CD8-positive, alpha-beta T cell (primary cell): ENCODE measurements at regions of chr16 and their contacts with region 1.

Region 1: GRCh38 chr16:8905168-8905762 is 23.1 kb downstream of the LITAFD start:
- DNase-seq: peak in 2 of 9 experiments; percentile 35 to 48
- ATAC-seq: peak; percentile 66
- H3K4me3 ChIP-seq: no peak overlapping the region
- H3K4me3 Mint-ChIP-seq: no peak overlapping the region
- H3K27ac ChIP-seq: no peak overlapping the region
- H3K27ac Mint-ChIP-seq: no peak overlapping the region
- H3K4me1 ChIP-seq: peaks cover 8% of the 10 kb centered on the region
- H3K4me1 Mint-ChIP-seq: peaks cover 11% of the 10 kb centered on the region
- H3K27me3 ChIP-seq: no peaks in the 10 kb centered on the region
- H3K27me3 Mint-ChIP-seq: no peaks in the 10 kb centered on the region
- CTCF ChIP-seq: peak; percentile 15

Region 2: DNA sequence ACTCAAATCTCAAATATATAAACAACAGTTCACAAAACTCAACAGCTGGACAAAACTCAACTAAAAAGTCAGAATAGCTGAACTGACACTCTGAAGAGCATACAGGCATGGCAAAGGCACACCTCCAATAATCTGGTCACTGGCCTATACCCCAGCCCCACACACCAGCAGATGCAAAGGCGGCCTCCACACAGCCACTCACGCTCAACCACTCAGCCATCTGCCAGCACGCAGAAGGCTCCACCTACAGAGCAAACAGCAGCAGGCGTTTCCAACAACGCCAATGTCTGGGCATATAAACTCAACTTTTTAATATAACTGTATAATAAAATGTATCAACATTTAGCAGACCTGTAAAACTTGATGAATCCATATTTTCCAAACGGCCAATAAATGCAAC is 41.3 kb after region 1 on chr16:
- CTCF ChIA-PET with region 1: no interaction called
- POLR2A ChIA-PET with region 1: no interaction called
- intact Hi-C with region 1: no loop called
- DNase-seq: no peak
- ATAC-seq: no peak
- H3K4me3 ChIP-seq: no peak overlapping the region
- H3K4me3 Mint-ChIP-seq: peak overlapping the region; percentile 15
- H3K27ac ChIP-seq: no peak overlapping the region
- H3K27ac Mint-ChIP-seq: no peak overlapping the region
- H3K4me1 ChIP-seq: peaks cover 96% of the 10 kb centered on the region
- H3K4me1 Mint-ChIP-seq: peaks cover 94% of the 10 kb centered on the region
- H3K27me3 ChIP-seq: no peaks in the 10 kb centered on the region
- H3K27me3 Mint-ChIP-seq: no peaks in the 10 kb centered on the region
- CTCF ChIP-seq: no peak

Region 3: DNA sequence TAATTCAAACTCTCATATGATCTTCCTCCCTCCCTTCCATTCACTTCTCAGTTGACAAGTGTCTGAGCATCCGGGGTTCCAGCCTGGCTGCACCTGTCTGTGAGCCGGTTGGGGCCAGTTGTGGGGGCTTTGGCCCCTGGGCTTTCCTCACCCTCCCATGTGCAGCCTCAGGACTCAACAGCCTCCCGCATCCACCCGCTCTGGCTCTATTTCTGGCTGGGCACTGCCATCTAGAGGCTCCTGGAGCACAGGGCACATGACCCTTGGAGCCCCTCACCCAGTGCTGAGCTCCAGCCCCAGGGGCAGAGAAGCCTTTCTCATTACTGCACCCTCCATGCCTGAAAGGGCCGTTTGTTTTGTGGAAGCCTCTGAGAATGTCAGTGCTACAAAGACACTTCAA is 229.5 kb after region 1 on chr16:
- CTCF ChIA-PET with region 1: interaction called, 3 read pairs
- POLR2A ChIA-PET with region 1: no interaction called
- intact Hi-C with region 1: loop called (anchors 10 kb)
- DNase-seq: peak; percentile 32 to 76 (median 64)
- ATAC-seq: peak; percentile 80
- H3K4me3 ChIP-seq: no peak overlapping the region
- H3K4me3 Mint-ChIP-seq: no peak overlapping the region
- H3K27ac ChIP-seq: no peak overlapping the region
- H3K27ac Mint-ChIP-seq: peak overlapping the region; percentile 55
- H3K4me1 ChIP-seq: peaks cover 13% of the 10 kb centered on the region
- H3K4me1 Mint-ChIP-seq: peaks cover 20% of the 10 kb centered on the region
- H3K27me3 ChIP-seq: no peaks in the 10 kb centered on the region
- H3K27me3 Mint-ChIP-seq: no peaks in the 10 kb centered on the region
- CTCF ChIP-seq: peak; percentile 68